CD8-positive, alpha-beta T cell (primary cell): ENCODE measurements at regions of chr4 and their contacts with region 1.

Region 1: GRCh38 chr4:77203380-77204197 is 46.6 kb downstream of the CCNG2 start:
- DNase-seq: peak; percentile 28 to 83 (median 72)
- ATAC-seq: peak; percentile 71
- H3K4me3 ChIP-seq: no peak overlapping the region
- H3K4me3 Mint-ChIP-seq: no peak overlapping the region
- H3K27ac ChIP-seq: no peak overlapping the region
- H3K27ac Mint-ChIP-seq: no peak overlapping the region
- H3K4me1 ChIP-seq: no peaks in the 10 kb centered on the region
- H3K4me1 Mint-ChIP-seq: peaks cover 10% of the 10 kb centered on the region
- H3K27me3 ChIP-seq: no peaks in the 10 kb centered on the region
- H3K27me3 Mint-ChIP-seq: peaks cover 5% of the 10 kb centered on the region
- CTCF ChIP-seq: peak; percentile 75

Region 2: DNA sequence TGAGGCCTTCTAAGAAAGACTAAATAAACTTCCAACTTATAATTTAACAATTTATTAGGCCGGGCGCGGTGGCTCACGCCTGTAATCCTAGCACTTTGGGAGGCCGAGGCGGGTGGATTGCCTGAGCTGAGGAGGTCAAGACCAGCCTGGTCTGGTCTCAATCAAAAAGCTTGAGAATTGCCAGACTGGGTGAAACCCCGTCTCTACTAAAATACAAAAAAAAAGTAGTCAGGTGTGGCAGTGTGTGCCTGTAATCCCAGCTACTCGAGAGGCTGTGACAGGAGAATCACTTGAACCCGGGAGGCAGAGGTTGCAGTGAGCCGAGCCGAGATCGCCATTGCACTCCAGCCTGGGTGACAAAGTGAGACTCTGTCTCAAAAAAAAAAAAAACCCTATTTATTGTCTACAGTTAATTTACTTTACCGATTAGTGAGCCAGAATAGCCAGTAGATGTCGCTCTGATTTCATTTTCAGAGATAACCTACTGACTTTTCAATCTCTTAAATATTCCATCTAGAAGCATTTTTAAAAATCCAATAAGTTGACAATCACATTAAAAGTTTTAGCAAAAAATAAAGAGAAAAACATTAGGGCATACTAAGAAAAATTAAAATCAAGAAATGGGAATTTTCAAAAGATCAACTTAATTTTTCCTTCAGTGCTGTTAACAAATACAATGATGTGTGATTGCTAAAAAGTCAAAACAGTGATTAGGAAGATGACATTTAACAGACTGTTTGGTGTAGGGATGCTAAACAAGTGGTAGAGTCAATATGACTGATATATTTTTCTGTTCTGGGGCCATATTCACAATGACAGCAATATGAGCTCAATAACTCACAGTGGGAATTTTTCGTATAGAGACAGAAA is 772.8 kb before region 1 on chr4:
- CTCF ChIA-PET with region 1: interaction called, 8 read pairs
- POLR2A ChIA-PET with region 1: no interaction called
- intact Hi-C with region 1: loop called (anchors 2 to 5 kb)
- DNase-seq: peak in 2 of 9 experiments; percentile 52 to 61
- ATAC-seq: no peak
- H3K4me3 ChIP-seq: no peak overlapping the region
- H3K4me3 Mint-ChIP-seq: no peak overlapping the region
- H3K27ac ChIP-seq: no peak overlapping the region
- H3K27ac Mint-ChIP-seq: no peak overlapping the region
- H3K4me1 ChIP-seq: no peaks in the 10 kb centered on the region
- H3K4me1 Mint-ChIP-seq: no peaks in the 10 kb centered on the region
- H3K27me3 ChIP-seq: no peaks in the 10 kb centered on the region
- H3K27me3 Mint-ChIP-seq: peaks cover under 1% of the 10 kb centered on the region
- CTCF ChIP-seq: peak; percentile 67

Region 3: DNA sequence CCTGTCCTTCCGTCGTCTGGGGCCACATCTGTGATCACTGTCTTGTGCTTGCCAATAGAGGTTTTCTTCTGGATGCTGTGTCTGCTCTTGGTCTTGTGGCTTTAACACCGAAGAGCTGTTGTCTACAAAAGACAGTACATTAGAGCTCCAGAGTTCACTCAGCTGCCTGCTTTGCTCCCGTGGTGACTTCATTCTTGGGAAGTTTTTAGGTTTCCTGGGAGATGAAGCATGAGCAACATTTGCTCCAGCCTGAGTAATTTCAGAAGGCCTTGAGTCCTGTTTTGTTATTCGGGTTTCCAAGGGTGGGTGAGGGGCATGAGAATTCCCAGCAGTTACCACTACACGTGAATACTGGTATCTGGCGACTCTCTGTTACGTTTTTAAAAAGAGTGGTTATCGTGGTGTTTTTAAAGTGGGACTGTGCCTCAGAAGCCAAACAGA is 579.3 kb before region 1 on chr4:
- CTCF ChIA-PET with region 1: no interaction called
- POLR2A ChIA-PET with region 1: no interaction called
- intact Hi-C with region 1: no loop called
- DNase-seq: no peak
- ATAC-seq: no peak
- H3K4me3 ChIP-seq: no peak overlapping the region
- H3K4me3 Mint-ChIP-seq: no peak overlapping the region
- H3K27ac ChIP-seq: no peak overlapping the region
- H3K27ac Mint-ChIP-seq: no peak overlapping the region
- H3K4me1 ChIP-seq: no peaks in the 10 kb centered on the region
- H3K4me1 Mint-ChIP-seq: no peaks in the 10 kb centered on the region
- H3K27me3 ChIP-seq: no peaks in the 10 kb centered on the region
- H3K27me3 Mint-ChIP-seq: peaks cover 26% of the 10 kb centered on the region
- CTCF ChIP-seq: no peak

Region 4: DNA sequence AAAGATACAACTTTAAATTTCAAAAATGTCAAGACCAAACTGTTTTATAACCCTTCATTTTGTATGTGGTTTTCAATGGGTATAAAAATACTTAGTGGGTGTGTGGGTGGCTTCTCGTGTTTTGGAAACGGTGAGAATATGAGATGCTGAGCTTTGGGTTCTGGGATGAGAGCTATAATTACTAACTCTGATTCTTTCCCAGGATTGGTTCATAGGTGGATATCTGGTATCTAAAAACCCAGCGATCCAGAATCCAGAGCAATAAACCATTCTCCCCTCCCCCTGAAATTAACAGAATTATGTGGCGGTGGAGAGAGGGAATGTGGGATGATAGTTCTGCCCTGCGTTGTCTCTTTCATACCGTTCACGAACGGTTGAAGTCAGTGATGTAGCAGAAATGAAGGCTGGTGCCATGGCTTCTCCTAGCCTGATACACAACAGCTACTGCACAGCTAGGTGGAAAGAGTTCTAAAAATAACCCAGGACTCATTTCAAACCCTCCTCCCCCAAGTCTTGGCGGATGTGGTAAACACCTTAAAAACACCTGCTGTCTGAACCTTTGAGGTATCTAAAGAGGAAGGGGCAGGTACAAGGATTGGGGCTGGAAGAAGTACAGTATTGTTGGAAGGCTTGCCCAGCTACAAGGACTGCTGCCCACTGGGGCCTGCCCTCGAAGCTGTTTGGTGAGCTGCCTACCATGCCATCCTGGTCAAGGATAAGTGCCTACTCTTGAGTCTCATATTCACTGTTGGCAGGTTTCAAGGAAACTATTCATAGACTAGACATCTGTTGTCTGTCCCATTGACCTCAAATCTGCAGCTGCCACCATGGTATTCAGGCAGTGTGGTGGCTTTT is 209.6 kb before region 1 on chr4:
- CTCF ChIA-PET with region 1: interaction called, 12 read pairs
- POLR2A ChIA-PET with region 1: no interaction called
- intact Hi-C with region 1: no loop called
- DNase-seq: peak; percentile 10 to 81 (median 54)
- ATAC-seq: peak; percentile 65
- H3K4me3 ChIP-seq: peak overlapping the region in 1 of 2 experiments; percentile 55
- H3K4me3 Mint-ChIP-seq: peak overlapping the region; percentile 75
- H3K27ac ChIP-seq: peak overlapping the region; percentile 2 to 39
- H3K27ac Mint-ChIP-seq: peak overlapping the region; percentile 89
- H3K4me1 ChIP-seq: peaks cover 57% of the 10 kb centered on the region
- H3K4me1 Mint-ChIP-seq: peaks cover 61% of the 10 kb centered on the region
- H3K27me3 ChIP-seq: no peaks in the 10 kb centered on the region
- H3K27me3 Mint-ChIP-seq: no peaks in the 10 kb centered on the region
- CTCF ChIP-seq: no peak

Region 5: DNA sequence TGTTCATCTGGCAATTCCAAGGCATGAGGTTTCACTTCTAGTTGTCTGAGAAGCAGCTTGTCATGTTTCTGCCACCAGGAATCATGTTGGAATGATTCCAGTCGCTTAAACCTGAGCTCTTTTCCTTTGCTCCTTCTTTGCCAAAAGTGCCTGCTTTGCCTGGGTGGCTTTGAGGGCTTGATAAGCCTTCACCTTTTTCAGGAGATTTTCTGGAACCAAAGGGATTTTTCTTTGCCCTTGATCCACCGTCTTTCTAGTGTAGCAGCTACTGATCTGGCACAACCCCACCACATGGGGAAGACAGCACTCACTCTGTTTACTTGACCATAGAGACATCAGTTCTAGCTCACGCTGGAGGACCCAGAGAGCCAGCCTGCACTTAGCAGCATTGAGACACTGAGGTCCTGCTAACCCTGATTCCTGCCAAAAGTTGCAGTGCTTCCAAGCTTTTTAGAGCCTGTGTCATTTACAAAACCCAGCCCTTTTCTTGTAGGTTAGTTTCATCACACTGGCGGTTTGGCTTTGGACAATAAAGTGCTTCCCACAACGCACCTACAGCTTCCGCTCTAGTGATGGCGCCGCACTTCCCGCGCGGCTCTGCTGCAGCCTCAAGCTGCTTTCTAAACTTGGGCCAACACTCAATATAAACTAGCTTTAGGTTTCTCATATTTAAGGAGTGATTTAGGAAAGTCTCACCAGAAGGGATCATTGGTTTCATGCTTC is 120.5 kb before region 1 on chr4:
- CTCF ChIA-PET with region 1: interaction called, 322 read pairs
- POLR2A ChIA-PET with region 1: no interaction called
- intact Hi-C with region 1: loop called in 1 of 2 experiments (anchors 10 kb)
- DNase-seq: no peak
- ATAC-seq: no peak
- H3K4me3 ChIP-seq: no peak overlapping the region
- H3K4me3 Mint-ChIP-seq: no peak overlapping the region
- H3K27ac ChIP-seq: no peak overlapping the region
- H3K27ac Mint-ChIP-seq: no peak overlapping the region
- H3K4me1 ChIP-seq: peaks cover 1% of the 10 kb centered on the region
- H3K4me1 Mint-ChIP-seq: peaks cover 20% of the 10 kb centered on the region
- H3K27me3 ChIP-seq: no peaks in the 10 kb centered on the region
- H3K27me3 Mint-ChIP-seq: no peaks in the 10 kb centered on the region
- CTCF ChIP-seq: no peak

Region 6: GRCh38 chr4:77104791-77105540 is 98.6 kb before region 1 on chr4:
- CTCF ChIA-PET with region 1: interaction called, 322 read pairs
- POLR2A ChIA-PET with region 1: interaction called, 3 read pairs
- intact Hi-C with region 1: no loop called
- DNase-seq: peak in 2 of 9 experiments; percentile 8 to 16
- ATAC-seq: no peak
- H3K4me3 ChIP-seq: no peak overlapping the region
- H3K4me3 Mint-ChIP-seq: no peak overlapping the region
- H3K27ac ChIP-seq: no peak overlapping the region
- H3K27ac Mint-ChIP-seq: no peak overlapping the region
- H3K4me1 ChIP-seq: peaks cover 3% of the 10 kb centered on the region
- H3K4me1 Mint-ChIP-seq: peaks cover 9% of the 10 kb centered on the region
- H3K27me3 ChIP-seq: no peaks in the 10 kb centered on the region
- H3K27me3 Mint-ChIP-seq: peaks cover 7% of the 10 kb centered on the region
- CTCF ChIP-seq: no peak

Region 7: GRCh38 chr4:77174426-77174825 is 29.2 kb before region 1 on chr4:
- CTCF ChIA-PET with region 1: interaction called, 21 read pairs
- POLR2A ChIA-PET with region 1: no interaction called
- intact Hi-C with region 1: no loop called
- DNase-seq: no peak
- ATAC-seq: no peak
- H3K4me3 ChIP-seq: no peak overlapping the region
- H3K4me3 Mint-ChIP-seq: no peak overlapping the region
- H3K27ac ChIP-seq: no peak overlapping the region
- H3K27ac Mint-ChIP-seq: no peak overlapping the region
- H3K4me1 ChIP-seq: no peaks in the 10 kb centered on the region
- H3K4me1 Mint-ChIP-seq: no peaks in the 10 kb centered on the region
- H3K27me3 ChIP-seq: no peaks in the 10 kb centered on the region
- H3K27me3 Mint-ChIP-seq: no peaks in the 10 kb centered on the region
- CTCF ChIP-seq: no peak